Kidney (tissue), 22 donors: ENCODE measurements at regions of chr6 and their contacts with region 1.

Region 1: GRCh38 chr6:52598123-52598823 is 21.4 kb upstream of the TRAM2 start:
- DNase-seq: peak; percentile 80 to 90 (median 88)
- H3K4me3 ChIP-seq: peak overlapping the region in 2 of 3 donors; percentile 2 to 23
- H3K27ac ChIP-seq: no peak overlapping the region
- H3K4me1 ChIP-seq: peaks cover 8 to 16% (median 9%) of the 10 kb centered on the region in 3 donors
- H3K27me3 ChIP-seq: no peaks in the 10 kb centered on the region
- CTCF ChIP-seq: peak; percentile 69

Region 2: DNA sequence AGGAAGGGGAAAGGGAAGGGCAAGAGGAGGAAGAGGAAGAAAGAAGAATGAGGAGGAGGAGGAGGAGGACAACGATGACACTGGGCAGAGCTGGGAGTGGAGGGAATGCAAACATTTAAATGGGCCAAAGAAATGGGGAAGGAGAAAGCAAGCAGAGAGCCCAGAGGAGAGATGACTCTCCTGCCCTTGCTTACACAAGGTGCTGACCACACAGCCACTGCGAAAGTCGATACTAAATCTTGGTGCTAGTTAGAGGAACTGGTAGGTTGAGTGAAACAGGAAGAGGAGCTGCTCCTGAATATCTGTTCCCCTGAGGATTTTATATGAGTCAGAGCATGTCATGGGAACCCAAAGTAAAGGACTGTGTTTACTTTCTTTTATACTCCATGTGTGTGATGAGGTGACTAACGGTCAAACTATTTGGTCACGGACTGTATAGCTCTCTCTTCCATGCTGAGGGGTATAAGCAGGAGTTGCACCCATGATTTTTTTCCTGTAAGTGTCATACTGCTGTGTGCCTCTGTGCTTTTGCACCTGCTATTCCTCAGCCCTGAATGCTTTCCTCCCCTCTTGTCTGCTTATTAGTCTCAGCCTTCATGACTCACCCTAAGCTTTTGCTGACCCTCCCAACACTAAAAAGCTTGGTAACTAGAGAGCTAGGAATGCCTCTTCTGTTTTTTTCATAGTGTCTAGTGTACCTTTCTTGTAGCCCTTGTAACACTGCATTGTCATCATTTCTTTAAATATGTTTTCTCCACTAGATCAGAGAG is 245.8 kb before region 1 on chr6:
- intact Hi-C with region 1: no loop called
- DNase-seq: peak in 2 of 5 donors; percentile 12 to 23
- H3K4me3 ChIP-seq: no peak overlapping the region
- H3K27ac ChIP-seq: no peak overlapping the region
- H3K4me1 ChIP-seq: no peaks in the 10 kb centered on the region
- H3K27me3 ChIP-seq: no peaks in the 10 kb centered on the region
- CTCF ChIP-seq: no peak

Region 3: DNA sequence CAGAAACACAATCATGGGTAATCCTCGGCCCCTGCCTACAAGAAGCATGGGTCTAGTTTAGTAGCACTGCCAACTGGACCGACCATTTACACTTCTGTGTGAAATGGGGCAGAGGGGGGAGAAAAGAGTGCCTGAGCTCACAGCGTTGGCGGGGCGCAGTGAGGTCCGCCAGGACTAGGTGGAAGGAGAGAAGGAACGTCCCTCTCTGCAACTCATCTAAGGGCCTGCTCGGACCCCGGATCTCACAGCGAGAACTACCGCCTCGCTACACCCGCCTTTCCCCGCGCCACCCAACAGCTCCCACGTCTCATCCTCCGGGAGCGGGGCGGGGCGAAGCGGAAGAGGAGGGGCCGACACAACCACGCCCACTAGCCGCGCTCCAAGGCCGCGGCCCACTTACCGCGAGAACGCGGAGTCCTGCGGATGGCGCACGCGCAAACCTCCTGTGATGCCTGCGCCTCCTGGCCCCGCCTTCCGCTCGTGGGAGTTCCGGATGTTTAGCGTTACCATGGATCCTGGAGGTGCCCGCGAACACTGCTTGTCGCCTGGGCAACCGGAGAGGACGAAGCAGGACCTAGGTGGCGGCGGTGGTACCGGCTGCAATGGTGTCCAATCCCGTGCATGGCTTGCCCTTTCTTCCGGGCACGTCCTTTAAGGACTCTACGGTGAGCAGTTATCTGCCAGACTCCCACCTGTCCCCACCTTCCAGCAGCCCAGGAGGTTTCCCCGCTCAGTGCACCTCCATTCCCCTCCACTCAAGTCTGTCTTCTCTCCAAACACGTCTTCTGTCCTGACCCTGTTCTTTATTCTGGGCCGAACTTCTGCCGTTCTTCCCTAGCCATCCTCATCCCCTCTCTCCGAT is 178.2 kb before region 1 on chr6 and contains the start of gene EFHC1:
- intact Hi-C with region 1: loop called (anchors 5 kb)
- DNase-seq: peak; percentile 99
- H3K4me3 ChIP-seq: peak within 1 kb of the TSS; percentile 92 to 100 (median 99)
- H3K27ac ChIP-seq: peak within 1 kb of the TSS; percentile 89 to 90
- H3K4me1 ChIP-seq: peaks cover 0 to 4% (median 3%) of the 10 kb centered on the region in 3 donors
- H3K27me3 ChIP-seq: no peaks in the 10 kb centered on the region
- CTCF ChIP-seq: no peak
- total RNA-seq, gene EFHC1: 33.9 TPM